ENCODE measurements at regions of chr9 and their contacts with region 1.

Region 1: DNA sequence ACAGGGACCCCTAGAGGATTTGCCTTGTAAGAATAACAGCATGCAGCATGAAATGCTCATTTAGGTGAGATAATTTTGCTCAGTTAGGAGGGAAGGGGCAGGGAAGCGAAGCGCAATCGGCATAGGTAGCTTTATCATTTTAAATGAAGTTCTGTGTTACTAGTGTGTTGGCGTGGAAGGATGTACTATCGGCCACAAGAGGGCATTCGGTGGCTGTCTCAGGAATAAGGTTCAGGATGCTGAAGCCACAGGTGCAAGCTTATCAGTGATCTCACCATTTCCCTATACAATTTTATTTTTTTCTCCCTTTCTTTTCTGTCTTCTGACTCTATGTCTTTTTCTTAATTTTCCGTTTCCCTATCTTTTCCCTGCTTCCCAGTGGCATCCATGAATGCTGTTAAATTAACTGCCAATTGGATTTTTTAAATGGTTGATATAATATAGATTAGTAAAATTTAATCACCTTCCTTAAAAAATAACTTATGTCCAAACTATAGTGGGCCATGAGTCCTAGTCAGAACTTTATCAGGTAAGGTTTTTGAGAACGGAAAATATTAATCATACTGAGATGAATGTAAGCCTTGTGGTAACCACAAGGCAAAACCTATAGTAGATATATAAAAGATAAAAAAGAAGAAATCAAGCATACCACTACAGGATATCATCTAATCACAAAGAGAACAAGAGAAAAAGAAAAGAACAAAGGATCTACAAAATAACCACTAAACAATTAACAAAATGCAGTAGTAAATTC is 1.2 kb upstream of the INSL6 start:
- DNase-seq: peak in 1 of 2 donors; percentile 30
- ATAC-seq: no peak
- H3K4me3 ChIP-seq: no peak overlapping the region
- H3K27ac ChIP-seq: no peak overlapping the region
- H3K4me1 ChIP-seq: no peaks in the 10 kb centered on the region
- H3K27me3 ChIP-seq: no peaks in the 10 kb centered on the region
- CTCF ChIP-seq: peak in 3 of 5 experiments; percentile 39 to 56 (median 55)
- POLR2A ChIP-seq: no peak

Region 2: DNA sequence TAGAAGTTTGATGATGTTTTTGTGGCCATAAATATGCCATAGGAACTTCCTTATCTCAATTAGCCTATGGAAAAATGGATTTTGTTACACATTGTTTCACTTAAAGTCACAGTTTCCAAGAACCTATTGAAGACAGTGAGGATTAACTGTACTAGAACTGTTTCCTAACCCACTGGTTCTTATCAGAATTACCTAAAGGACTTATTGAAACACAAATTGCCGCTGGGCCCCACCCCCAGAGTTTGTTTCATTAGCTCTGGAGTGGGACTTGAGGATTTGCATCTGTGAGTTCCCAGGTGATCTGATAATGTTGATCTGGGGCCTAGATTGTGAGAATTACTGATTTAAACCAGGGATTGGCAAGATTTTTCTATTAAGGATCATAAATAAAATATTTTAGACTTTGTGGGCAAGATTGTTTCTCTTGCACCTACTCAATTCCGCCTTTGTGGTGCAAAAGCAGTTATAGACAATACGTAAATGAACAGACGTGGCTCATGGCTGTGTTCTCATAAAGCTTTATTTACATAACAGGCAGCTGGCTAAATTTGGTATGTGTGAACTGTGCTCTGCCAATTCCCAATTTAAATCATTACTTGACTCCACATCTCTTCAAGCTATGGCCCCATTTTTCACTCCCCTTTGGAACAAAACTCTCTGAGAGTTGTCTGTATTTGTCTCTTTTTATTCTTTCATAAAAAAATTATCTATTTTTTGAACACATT is 192.3 kb before region 1 on chr9:
- in situ Hi-C with region 1: no loop called
- intact Hi-C with region 1: no loop called
- DNase-seq: no peak
- ATAC-seq: no peak
- H3K4me3 ChIP-seq: no peak overlapping the region
- H3K27ac ChIP-seq: peak overlapping the region in 1 of 4 donors; percentile 35
- H3K4me1 ChIP-seq: peaks cover 4 to 14% of the 10 kb centered on the region in 2 donors
- H3K27me3 ChIP-seq: no peaks in the 10 kb centered on the region
- CTCF ChIP-seq: no peak
- POLR2A ChIP-seq: no peak

Region 3: GRCh38 chr9:5402217-5402616 is 215.6 kb after region 1 on chr9:
- in situ Hi-C with region 1: loop called in 2 of 4 experiments (anchors 25 kb)
- intact Hi-C with region 1: no loop called
- DNase-seq: no peak
- ATAC-seq: no peak
- H3K4me3 ChIP-seq: no peak overlapping the region
- H3K27ac ChIP-seq: no peak overlapping the region
- H3K4me1 ChIP-seq: no peaks in the 10 kb centered on the region
- H3K27me3 ChIP-seq: no peaks in the 10 kb centered on the region
- CTCF ChIP-seq: no peak
- POLR2A ChIP-seq: no peak

Region 4: DNA sequence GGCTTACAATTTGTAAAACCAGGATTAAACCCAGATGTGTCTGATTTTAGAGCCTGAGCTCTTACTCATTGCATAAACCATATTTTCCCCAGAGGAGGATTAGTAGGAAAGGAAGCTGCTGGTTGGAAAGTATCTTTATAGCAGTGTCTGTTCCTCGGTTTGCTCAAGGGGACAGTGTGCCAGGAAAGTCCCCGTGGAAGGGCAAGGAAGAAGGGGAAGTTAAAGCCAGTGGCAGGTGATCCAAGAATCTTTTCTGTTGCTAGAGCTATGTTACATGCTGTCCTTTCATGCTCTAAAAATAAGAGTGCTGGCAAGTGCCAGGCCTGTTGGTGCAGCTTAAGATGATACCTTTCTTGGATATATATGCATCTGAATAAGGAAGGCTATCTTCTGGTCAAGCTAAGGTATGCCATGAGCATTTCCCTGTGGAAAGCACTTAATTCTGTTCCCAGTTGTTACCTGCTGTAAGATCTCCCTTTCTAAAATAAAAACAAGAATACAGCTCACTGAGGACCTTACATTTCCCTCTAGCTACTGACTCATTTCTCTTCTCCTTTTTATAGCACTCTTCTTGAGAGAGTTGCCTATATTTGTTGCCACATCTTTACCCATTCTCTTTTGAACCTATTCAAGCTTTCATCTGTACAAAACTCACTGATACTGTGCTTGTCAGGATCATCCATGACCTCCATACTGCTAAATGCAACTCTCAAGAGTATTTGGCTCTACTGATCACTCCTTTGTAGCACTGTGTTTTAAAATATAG is 331.8 kb after region 1 on chr9:
- in situ Hi-C with region 1: no loop called
- intact Hi-C with region 1: no loop called
- DNase-seq: peak; percentile 79 to 89
- ATAC-seq: peak; percentile 95 to 99
- H3K4me3 ChIP-seq: no peak overlapping the region
- H3K27ac ChIP-seq: peak overlapping the region; percentile 81 to 89 (median 84)
- H3K4me1 ChIP-seq: peaks cover 49 to 52% of the 10 kb centered on the region in 2 donors
- H3K27me3 ChIP-seq: no peaks in the 10 kb centered on the region
- CTCF ChIP-seq: no peak
- POLR2A ChIP-seq: no peak

Region 5: DNA sequence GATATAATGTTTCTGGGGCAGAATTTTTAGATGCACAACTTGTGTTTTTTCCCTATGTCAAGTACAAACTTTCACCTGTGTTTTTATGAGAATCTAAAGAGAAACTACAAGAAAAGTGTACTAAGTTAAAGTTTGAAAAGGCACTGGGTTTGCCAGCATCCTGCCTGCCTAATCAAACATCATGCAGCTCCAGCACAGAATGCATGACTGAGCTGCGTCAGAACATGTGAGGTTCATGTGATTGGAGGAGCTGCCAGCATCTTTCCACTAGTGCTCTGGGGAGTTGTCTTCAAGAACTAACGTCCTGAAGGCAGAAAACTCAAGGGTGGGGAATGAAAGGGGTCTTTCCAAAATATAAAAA is 396.2 kb after region 1 on chr9:
- in situ Hi-C with region 1: loop called in 2 of 4 experiments (anchors 25 kb)
- intact Hi-C with region 1: no loop called
- DNase-seq: peak; percentile 30 to 31
- ATAC-seq: peak; percentile 40 to 54
- H3K4me3 ChIP-seq: no peak overlapping the region
- H3K27ac ChIP-seq: no peak overlapping the region
- H3K4me1 ChIP-seq: peaks cover 10 to 12% of the 10 kb centered on the region in 2 donors
- H3K27me3 ChIP-seq: no peaks in the 10 kb centered on the region
- CTCF ChIP-seq: no peak
- POLR2A ChIP-seq: no peak

Region 6: DNA sequence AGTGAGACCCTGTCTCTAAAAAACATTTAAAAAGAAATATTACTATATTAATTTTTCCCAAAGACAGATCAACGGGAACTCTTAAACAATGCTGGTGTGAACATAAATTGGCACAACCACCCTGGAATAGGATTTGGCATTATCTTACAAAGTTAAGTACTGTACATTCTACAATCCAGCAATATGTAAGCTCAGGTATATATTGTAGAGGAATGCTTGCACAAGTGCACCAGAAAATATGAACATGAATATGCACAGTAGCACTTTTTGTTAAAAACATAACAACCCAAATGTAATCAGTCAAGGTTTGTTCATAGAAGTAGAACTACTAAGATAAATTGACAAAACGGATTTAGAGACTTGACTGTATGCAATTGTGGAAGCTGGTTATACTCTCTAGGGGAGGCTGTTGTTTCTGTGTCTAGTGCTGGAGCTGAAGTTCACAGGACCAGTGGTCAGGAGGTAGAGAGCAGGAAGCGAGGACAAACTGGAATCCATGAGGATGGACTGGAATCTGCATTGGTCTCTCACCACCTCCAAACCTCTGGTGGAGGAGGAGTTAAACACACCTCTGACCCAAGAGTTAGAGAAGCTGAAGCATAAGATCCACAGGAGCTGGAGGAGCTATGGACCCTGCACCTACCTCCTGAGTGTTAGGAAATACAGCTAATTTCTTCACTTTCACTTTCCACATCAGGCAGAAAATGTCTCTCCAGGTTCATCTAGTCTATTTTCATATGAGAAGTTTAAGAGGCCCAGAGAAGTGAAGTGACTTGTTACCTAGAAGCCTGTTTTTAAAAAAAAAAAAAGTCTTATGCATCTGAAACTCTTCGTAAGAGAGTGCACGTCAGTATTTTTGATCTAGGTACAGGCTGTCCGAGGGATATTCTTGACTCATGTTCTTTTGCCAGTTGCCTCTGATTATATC is 422.0 kb after region 1 on chr9:
- in situ Hi-C with region 1: loop called in 1 of 4 experiments (anchors 5 kb)
- intact Hi-C with region 1: loop called (anchors 5 kb)
- DNase-seq: peak; percentile 37 to 41
- ATAC-seq: peak; percentile 87 to 91
- H3K4me3 ChIP-seq: peak overlapping the region; percentile 46 to 56 (median 51)
- H3K27ac ChIP-seq: peak overlapping the region; percentile 77 to 86 (median 84)
- H3K4me1 ChIP-seq: peaks cover 28 to 36% of the 10 kb centered on the region in 2 donors
- H3K27me3 ChIP-seq: no peaks in the 10 kb centered on the region
- CTCF ChIP-seq: no peak
- POLR2A ChIP-seq: no peak